Posterior vena cava (tissue), 2 donors: ENCODE measurements at regions of chr3 and their contacts with region 1.

Region 1: GRCh38 chr3:89186456-89186855 is 79.0 kb downstream of the EPHA3 start:
- DNase-seq: no peak

Region 2: DNA sequence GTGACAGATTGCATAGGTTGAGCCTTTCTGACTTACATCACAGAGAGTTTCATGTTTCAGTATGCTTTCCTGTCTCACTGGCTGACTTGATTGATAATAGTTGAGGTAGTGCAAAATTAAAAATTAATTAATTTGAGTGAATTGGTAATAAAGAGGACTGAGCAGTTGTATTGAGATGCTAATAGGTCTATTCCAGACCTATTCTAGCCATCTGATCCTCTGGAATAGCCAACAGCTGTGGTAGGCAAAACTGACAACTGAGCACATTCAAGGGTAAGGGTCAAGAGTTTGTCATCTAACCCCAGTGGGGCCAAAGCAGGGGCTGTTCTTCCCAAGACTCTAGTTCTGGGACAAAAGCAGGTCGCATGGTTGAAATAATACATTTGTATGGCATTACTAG is 53.3 kb after region 1 on chr3:
- intact Hi-C with region 1: loop called in 1 of 2 experiments (anchors 2 kb)
- DNase-seq: no peak

Region 3: GRCh38 chr3:90055666-90056065 is 869.2 kb after region 1 on chr3:
- intact Hi-C with region 1: no loop called
- DNase-seq: no peak